ENCODE measurements at regions of chr13 and their contacts with region 1.

Region 1: DNA sequence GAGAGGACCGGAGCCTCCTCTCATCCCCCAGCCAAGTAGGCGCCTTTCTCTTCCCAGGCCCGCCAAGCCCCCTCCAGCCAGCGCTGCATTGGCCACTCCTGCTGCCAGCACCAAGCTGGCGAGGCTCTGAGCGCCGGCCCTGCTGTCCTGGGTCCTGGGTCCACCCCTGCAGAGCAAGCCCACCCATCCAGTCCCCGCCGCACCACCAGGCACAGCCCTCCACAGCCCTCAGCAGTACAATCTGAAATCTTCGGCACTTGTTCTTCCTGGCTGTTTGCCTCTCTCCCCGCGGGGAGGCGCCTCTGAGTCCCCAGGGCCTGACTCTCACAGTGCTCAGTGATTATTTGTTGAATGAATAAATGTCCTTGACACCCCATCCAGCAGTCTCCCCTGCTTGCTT is 236.4 kb upstream of the SGCG start:
- DNase-seq: no peak
- H3K4me3 ChIP-seq: no peak overlapping the region
- H3K27ac ChIP-seq: no peak overlapping the region
- H3K4me1 ChIP-seq: no peaks in the 10 kb centered on the region
- H3K27me3 ChIP-seq: no peaks in the 10 kb centered on the region
- CTCF ChIP-seq: no peak
- POLR2A ChIP-seq: no peak

Region 2: GRCh38 chr13:24360106-24360505 is 1415.7 kb after region 1 on chr13:
- CTCF ChIA-PET with region 1: no interaction called
- POLR2A ChIA-PET with region 1: no interaction called
- dilution Hi-C with region 1: no loop called
- intact Hi-C with region 1: loop called (anchors 10 kb)
- DNase-seq: no peak
- H3K4me3 ChIP-seq: no peak overlapping the region
- H3K27ac ChIP-seq: no peak overlapping the region
- H3K4me1 ChIP-seq: no peaks in the 10 kb centered on the region
- H3K27me3 ChIP-seq: no peaks in the 10 kb centered on the region
- CTCF ChIP-seq: no peak
- POLR2A ChIP-seq: no peak